CD4-positive, alpha-beta T cell (primary cell): ENCODE measurements at regions of chr6 and their contacts with region 1.

Region 1: DNA sequence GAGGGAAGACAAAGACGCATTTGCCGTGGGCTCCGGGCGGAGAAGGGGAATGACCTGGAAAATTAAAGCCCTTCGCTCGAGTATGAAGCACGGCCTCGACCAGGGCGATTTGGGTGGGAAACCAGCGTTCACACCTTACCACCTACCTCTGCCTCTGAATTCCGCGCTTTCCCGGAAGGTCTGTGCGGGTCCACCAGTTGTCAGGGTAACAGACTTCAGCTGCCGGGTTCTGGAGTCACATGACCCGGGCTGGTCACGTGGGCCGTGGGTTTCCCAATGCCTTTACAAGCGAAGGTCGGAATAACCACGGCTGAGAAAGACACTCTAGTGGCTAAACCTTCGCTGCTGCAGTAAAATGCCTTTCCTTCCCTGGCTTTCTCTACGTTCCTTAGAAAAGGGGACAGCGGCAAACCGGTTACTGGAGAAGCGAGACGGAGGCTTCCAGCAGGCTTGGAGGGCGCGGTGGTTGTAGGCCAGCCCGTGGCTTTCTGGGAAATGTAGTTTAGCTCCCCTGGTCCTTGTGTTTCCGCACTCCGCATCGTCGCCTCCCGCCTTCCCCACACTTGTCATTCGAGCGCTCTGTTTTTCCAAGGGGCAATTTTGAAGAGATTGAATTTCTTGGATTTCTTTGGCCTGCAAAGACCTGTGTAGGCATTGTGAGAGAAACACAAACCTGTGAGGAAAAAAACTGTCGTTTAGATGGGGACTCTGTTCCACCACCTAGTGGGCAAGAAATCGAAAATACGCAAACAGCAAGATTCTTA is at the start of gene CEP162:
- DNase-seq: peak; percentile 76 to 93 (median 85)
- ATAC-seq: peak; percentile 90
- H3K4me3 ChIP-seq: peak within 1 kb of the TSS; percentile 80
- H3K4me3 Mint-ChIP-seq: peak within 1 kb of the TSS; percentile 99
- H3K27ac ChIP-seq: peak within 1 kb of the TSS; percentile 58 to 59
- H3K27ac Mint-ChIP-seq: peak within 1 kb of the TSS; percentile 86
- H3K4me1 ChIP-seq: peaks cover 8% of the 10 kb centered on the region
- H3K4me1 Mint-ChIP-seq: peaks cover 27% of the 10 kb centered on the region
- H3K27me3 ChIP-seq: peaks cover 0 to 4% of the 10 kb centered on the region in 2 experiments
- H3K27me3 Mint-ChIP-seq: peaks cover 14% of the 10 kb centered on the region
- CTCF ChIP-seq: peak; percentile 83
- total RNA-seq, gene CEP162: 2.6 to 2.8 TPM

Region 2: GRCh38 chr6:82247634-82248232 is 1979.9 kb before region 1 on chr6 and contains the start of gene IBTK:
- CTCF ChIA-PET with region 1: no interaction called
- POLR2A ChIA-PET with region 1: no interaction called
- intact Hi-C with region 1: loop called in 1 of 2 experiments (anchors 2 kb)
- DNase-seq: peak; percentile 84 to 97 (median 90)
- ATAC-seq: peak; percentile 87
- H3K4me3 ChIP-seq: peak within 1 kb of the TSS; percentile 67
- H3K4me3 Mint-ChIP-seq: peak within 1 kb of the TSS; percentile 96
- H3K27ac ChIP-seq: peak within 1 kb of the TSS; percentile 59 to 73
- H3K27ac Mint-ChIP-seq: peak within 1 kb of the TSS; percentile 98
- H3K4me1 ChIP-seq: peaks cover 24% of the 10 kb centered on the region
- H3K4me1 Mint-ChIP-seq: peaks cover 51% of the 10 kb centered on the region
- H3K27me3 ChIP-seq: no peaks in the 10 kb centered on the region
- H3K27me3 Mint-ChIP-seq: no peaks in the 10 kb centered on the region
- CTCF ChIP-seq: no peak
- total RNA-seq, gene IBTK: 11.0 to 11.2 TPM

Region 3: GRCh38 chr6:83067448-83068413 is 1159.9 kb before region 1 on chr6 and contains the start of gene DOP1A:
- CTCF ChIA-PET with region 1: interaction called, 6 read pairs
- POLR2A ChIA-PET with region 1: no interaction called
- intact Hi-C with region 1: loop called (anchors 5 kb)
- DNase-seq: peak; percentile 93 to 98 (median 96)
- ATAC-seq: peak; percentile 89
- H3K4me3 ChIP-seq: peak within 1 kb of the TSS; percentile 82
- H3K4me3 Mint-ChIP-seq: peak within 1 kb of the TSS; percentile 91
- H3K27ac ChIP-seq: peak within 1 kb of the TSS; percentile 85 to 89
- H3K27ac Mint-ChIP-seq: peak within 1 kb of the TSS; percentile 90
- H3K4me1 ChIP-seq: peaks cover 19% of the 10 kb centered on the region
- H3K4me1 Mint-ChIP-seq: peaks cover 67% of the 10 kb centered on the region
- H3K27me3 ChIP-seq: no peaks in the 10 kb centered on the region
- H3K27me3 Mint-ChIP-seq: no peaks in the 10 kb centered on the region
- CTCF ChIP-seq: peak; percentile 95
- total RNA-seq, gene DOP1A: 15.6 to 15.8 TPM

Region 4: GRCh38 chr6:83192871-83193746 is 1034.5 kb before region 1 on chr6 and contains the starts of genes PGM3 and RWDD2A:
- CTCF ChIA-PET with region 1: no interaction called
- POLR2A ChIA-PET with region 1: no interaction called
- intact Hi-C with region 1: loop called (anchors 10 kb)
- DNase-seq: peak; percentile 81 to 96 (median 89)
- ATAC-seq: peak; percentile 97
- H3K4me3 ChIP-seq: peak within 1 kb of the TSS; percentile 88
- H3K4me3 Mint-ChIP-seq: peak within 1 kb of the TSS; percentile 97
- H3K27ac ChIP-seq: peak within 1 kb of the TSS in 1 of 2 donors; percentile 70
- H3K27ac Mint-ChIP-seq: peak within 1 kb of the TSS; percentile 94
- H3K4me1 ChIP-seq: peaks cover 17% of the 10 kb centered on the region
- H3K4me1 Mint-ChIP-seq: peaks cover 54% of the 10 kb centered on the region
- H3K27me3 ChIP-seq: no peaks in the 10 kb centered on the region
- H3K27me3 Mint-ChIP-seq: no peaks in the 10 kb centered on the region
- CTCF ChIP-seq: no peak
- total RNA-seq, gene PGM3: 22.6 to 25.3 TPM
- total RNA-seq, gene RWDD2A: 2.8 to 3.0 TPM

Region 5: DNA sequence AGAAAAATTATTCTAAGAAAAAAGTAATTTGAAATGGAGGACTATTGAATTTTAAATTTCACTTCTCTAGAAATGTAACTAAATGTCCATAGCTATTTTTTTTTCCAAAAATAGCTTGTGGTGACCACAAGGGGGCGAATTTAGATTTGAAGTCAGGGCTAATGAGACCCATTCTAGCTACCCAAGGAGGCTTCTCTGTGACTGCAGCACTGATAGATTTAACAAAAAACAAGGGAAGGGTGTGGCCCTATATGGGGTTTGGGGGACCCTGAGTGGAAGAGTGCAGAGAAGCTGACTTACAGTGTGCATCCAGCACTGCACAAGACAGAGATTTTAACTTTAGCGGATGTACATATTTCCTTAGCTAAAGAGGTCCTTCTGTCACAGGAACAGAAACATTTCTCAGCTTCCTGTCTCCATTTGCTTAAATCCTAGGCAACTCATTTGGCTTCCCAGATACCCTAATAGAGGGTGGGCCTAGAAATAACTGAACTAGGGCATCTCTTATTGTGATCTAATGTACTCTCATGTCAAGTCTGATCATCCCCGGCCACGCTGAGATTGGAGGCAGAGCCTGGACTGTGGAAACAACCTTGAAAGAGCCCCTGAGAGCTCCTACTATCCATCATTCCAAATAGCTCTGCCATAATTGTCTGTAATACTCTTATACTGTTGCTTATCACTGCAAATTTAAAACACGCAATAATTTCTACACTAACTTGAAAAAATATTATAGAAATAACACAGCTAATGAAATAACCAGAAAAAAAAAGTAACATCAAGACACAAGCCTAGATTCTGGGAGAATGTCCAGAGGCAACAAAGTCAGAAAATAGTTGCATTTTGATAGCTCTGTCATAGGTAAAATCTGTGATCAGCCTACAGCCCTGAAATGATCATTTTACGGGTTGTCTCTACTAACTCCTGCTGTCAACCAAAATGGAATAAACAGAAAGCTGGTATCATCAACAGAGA is 612.3 kb before region 1 on chr6:
- CTCF ChIA-PET with region 1: no interaction called
- POLR2A ChIA-PET with region 1: no interaction called
- intact Hi-C with region 1: loop called (anchors 10 kb)
- DNase-seq: peak in 3 of 14 experiments; percentile 11 to 22 (median 19)
- ATAC-seq: no peak
- H3K4me3 ChIP-seq: no peak overlapping the region
- H3K4me3 Mint-ChIP-seq: no peak overlapping the region
- H3K27ac ChIP-seq: no peak overlapping the region
- H3K27ac Mint-ChIP-seq: no peak overlapping the region
- H3K4me1 ChIP-seq: no peaks in the 10 kb centered on the region
- H3K4me1 Mint-ChIP-seq: no peaks in the 10 kb centered on the region
- H3K27me3 ChIP-seq: no peaks in the 10 kb centered on the region
- H3K27me3 Mint-ChIP-seq: no peaks in the 10 kb centered on the region
- CTCF ChIP-seq: no peak

Region 6: DNA sequence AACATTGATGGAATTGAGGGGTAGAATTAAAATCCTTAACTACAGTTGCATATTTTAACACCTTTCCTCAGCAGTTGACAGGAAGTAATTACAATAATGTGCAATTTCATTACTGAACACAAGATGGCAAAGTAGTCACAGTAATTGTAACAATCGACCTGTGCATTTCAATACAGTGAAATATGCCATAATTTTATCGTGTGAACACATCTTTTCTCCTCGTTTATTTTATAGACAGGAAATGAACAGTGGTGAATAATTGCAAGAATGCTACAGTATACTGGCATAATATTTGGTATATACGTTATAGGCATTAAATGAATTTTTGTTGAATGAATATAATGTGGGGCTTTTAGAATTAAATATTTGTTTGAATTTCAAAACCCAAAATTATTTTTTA is 343.1 kb before region 1 on chr6:
- CTCF ChIA-PET with region 1: interaction called, 5 read pairs
- POLR2A ChIA-PET with region 1: no interaction called
- intact Hi-C with region 1: loop called (anchors 2 kb)
- DNase-seq: peak in 3 of 14 experiments; percentile 63 to 65 (median 65)
- ATAC-seq: peak; percentile 74
- H3K4me3 ChIP-seq: no peak overlapping the region
- H3K4me3 Mint-ChIP-seq: no peak overlapping the region
- H3K27ac ChIP-seq: no peak overlapping the region
- H3K27ac Mint-ChIP-seq: no peak overlapping the region
- H3K4me1 ChIP-seq: no peaks in the 10 kb centered on the region
- H3K4me1 Mint-ChIP-seq: peaks cover 25% of the 10 kb centered on the region
- H3K27me3 ChIP-seq: no peaks in the 10 kb centered on the region
- H3K27me3 Mint-ChIP-seq: no peaks in the 10 kb centered on the region
- CTCF ChIP-seq: peak; percentile 87

Region 7: GRCh38 chr6:84332139-84333034 is 104.8 kb after region 1 on chr6:
- CTCF ChIA-PET with region 1: no interaction called
- POLR2A ChIA-PET with region 1: no interaction called
- intact Hi-C with region 1: no loop called
- DNase-seq: no peak
- ATAC-seq: no peak
- H3K4me3 ChIP-seq: no peak overlapping the region
- H3K4me3 Mint-ChIP-seq: no peak overlapping the region
- H3K27ac ChIP-seq: no peak overlapping the region
- H3K27ac Mint-ChIP-seq: no peak overlapping the region
- H3K4me1 ChIP-seq: no peaks in the 10 kb centered on the region
- H3K4me1 Mint-ChIP-seq: no peaks in the 10 kb centered on the region
- H3K27me3 ChIP-seq: no peaks in the 10 kb centered on the region
- H3K27me3 Mint-ChIP-seq: no peaks in the 10 kb centered on the region
- CTCF ChIP-seq: no peak